Right ventricle myocardium inferior (tissue), 1 donor: ENCODE measurements at regions of chr12 and their contacts with region 1.

Region 1: GRCh38 chr12:43882578-43883178 is 46.8 kb downstream of the TMEM117 start:
- DNase-seq: no peak
- ATAC-seq: peak; percentile 59

Region 2: GRCh38 chr12:43362910-43363694 is 519.6 kb before region 1 on chr12:
- intact Hi-C with region 1: no loop called
- DNase-seq: no peak
- ATAC-seq: no peak

Region 3: GRCh38 chr12:43444940-43445564 is 437.6 kb before region 1 on chr12:
- intact Hi-C with region 1: loop called (anchors 2 kb)
- DNase-seq: no peak
- ATAC-seq: no peak

Region 4: GRCh38 chr12:43776498-43776897 is 106.2 kb before region 1 on chr12:
- intact Hi-C with region 1: loop called (anchors 10 kb)
- DNase-seq: no peak
- ATAC-seq: no peak

Region 5: DNA sequence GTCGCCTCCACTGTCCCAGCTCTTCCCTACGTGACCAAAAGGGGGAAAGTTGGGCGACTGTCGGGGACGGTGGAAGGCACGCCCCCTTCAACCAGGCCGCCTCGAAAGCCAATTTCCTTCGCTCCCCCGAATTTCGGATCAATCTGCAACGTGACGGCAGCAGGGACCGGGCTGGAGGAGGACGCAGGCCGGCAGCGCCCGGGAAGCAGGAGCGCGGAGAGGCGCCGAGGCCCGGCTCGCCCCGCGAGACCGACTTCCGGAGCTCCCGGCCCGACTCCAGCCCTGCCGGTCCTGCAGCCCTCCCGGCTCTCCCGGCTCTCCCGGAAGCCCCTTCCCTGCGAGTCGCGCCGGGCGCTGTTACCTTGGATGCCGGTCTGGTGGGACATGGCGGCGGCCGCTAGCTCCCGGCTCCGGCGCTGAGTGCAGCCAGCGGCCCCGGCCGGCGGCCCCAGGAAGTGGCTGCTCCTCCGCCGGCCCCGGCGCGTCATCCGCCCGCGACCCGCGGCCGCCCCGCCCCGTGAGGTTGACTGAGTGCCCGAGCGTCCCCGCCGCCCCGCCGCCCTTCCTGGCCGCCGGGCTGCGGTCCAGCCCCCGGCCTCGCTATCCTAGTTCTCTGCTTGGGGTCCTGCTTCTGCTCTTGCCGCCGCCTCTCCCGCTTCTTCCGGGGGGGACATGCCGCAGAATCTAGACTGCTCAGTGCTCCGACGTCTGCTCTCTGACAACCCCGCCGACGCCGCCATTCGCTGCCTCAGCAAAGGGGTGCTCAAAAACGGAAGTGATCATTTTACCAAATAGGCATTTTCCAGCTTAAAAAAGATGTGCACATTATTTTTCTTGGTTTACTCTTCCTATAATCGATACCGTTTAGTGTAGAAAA is 76.6 kb before region 1 on chr12 and contains the start of gene TWF1:
- intact Hi-C with region 1: loop called (anchors 2 kb)
- DNase-seq: peak; percentile 95
- ATAC-seq: peak; percentile 100
- total RNA-seq, gene TWF1: 14.0 TPM

Region 6: GRCh38 chr12:44260581-44260980 is 377.9 kb after region 1 on chr12:
- intact Hi-C with region 1: no loop called
- DNase-seq: no peak
- ATAC-seq: no peak